ENCODE measurements at regions of chr18 and their contacts with region 1.

Region 1: DNA sequence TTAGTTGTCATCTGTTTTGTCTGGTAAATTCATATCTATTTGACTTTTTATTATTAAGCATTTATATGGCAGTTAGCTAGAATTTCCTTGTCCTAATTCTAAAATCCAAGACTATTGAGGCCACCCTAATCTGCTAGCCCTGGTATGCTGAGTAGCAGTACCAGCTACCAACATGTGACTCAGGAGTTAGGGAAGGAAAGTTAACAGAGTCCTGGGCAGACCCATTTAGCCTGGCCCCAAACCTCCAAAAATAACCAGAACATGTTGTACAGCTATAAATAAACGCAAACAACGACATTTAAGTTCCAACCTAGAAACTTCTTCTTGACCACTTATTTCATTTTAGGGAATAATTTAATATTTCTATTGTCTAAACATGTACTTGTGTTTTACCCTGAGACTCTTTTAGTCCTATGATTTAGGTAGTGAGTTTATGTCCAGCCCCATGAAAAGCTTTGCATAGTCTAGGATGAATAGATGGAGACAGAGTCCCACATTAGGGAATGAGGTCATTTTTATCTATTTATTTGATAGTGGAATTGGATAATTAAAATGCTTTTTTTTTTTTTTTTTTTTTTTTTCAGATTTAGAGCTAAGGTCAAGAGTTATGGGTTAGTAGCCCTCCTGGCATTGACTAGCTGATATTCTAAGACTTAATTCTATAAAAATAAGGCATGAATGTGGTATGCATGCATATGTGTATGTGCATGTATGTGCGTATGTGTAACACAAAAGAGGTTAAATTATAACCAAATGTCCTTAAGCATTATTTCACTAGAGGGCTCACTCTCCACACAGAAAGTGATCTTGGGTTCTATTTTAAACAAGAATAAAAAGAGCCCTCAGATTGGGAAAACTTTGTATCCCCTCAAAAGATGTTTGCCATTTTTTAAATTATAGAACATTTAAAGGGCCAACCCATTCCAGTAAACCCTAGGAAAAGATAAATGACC is 160.1 kb upstream of the MAPRE2 start:
- DNase-seq: no peak
- H3K4me3 ChIP-seq: no peak overlapping the region
- H3K27ac ChIP-seq: peak overlapping the region; percentile 36 to 76 (median 66)
- H3K4me1 ChIP-seq: peaks cover 0 to 23% (median 16%) of the 10 kb centered on the region in 4 donors
- H3K27me3 ChIP-seq: no peaks in the 10 kb centered on the region
- CTCF ChIP-seq: no peak
- EP300 ChIP-seq: peak in 1 of 4 donors; percentile 28
- POLR2A ChIP-seq: no peak

Region 2: GRCh38 chr18:34929336-34929780 is 48.2 kb after region 1 on chr18:
- intact Hi-C with region 1: no loop called
- DNase-seq: no peak
- H3K4me3 ChIP-seq: no peak overlapping the region
- H3K27ac ChIP-seq: no peak overlapping the region
- H3K4me1 ChIP-seq: peaks cover 0 to 9% (median 4%) of the 10 kb centered on the region in 4 donors
- H3K27me3 ChIP-seq: no peaks in the 10 kb centered on the region
- CTCF ChIP-seq: no peak
- EP300 ChIP-seq: no peak
- POLR2A ChIP-seq: no peak

Region 3: DNA sequence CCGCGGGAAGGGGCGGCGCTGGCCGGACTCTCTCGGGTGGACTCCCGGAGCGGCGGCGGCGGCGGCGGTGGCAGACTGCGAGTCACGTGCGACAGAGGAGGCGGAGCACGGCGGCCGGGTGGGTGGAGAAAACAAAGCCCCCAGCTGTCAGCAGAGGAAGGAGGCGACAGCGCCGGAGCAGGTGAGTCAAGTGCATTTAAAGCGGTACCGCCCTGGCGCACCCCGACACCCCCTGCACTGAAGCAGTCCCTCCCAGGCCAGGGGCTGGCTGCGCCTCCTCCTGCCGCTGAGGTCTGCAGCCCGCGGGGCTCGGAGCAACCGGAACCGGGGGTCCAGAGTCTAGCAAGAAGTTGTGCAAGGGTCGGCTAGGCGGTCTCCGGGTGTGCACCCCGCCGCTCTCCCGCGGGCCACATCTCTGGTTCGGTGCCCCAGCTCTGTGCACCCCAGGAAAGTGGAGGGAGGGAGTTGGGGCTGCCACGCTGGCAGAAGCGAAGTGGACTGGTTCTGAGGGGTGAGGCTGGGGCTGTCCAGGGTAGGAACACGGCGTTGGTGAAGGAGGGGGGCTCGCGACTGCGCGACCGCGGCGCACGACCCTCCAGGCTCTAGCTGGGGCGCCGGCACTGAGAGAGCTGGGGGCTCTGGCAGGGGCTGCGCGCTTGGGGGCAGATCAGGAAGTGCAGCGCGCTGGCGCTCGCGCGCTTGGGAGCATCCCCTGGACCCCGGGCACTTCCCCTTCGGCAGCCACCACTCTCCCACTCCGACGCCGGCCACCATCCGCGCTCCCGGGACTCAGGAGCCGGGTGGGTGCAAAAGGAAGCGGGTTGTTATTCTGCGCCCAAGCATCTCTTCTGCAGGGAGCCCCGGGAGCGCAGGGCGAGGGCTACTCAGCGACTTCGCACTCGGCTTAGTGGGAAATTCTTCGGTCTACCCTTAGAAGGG is 96.0 kb after region 1 on chr18:
- intact Hi-C with region 1: loop called (anchors 5 kb)
- DNase-seq: peak; percentile 86
- H3K4me3 ChIP-seq: peak overlapping the region; percentile 55 to 83 (median 71)
- H3K27ac ChIP-seq: peak overlapping the region; percentile 16 to 79 (median 74)
- H3K4me1 ChIP-seq: peaks cover 0 to 23% (median 15%) of the 10 kb centered on the region in 4 donors
- H3K27me3 ChIP-seq: no peaks in the 10 kb centered on the region
- CTCF ChIP-seq: no peak
- EP300 ChIP-seq: no peak
- POLR2A ChIP-seq: peak in 1 of 2 donors; percentile 23

Region 4: DNA sequence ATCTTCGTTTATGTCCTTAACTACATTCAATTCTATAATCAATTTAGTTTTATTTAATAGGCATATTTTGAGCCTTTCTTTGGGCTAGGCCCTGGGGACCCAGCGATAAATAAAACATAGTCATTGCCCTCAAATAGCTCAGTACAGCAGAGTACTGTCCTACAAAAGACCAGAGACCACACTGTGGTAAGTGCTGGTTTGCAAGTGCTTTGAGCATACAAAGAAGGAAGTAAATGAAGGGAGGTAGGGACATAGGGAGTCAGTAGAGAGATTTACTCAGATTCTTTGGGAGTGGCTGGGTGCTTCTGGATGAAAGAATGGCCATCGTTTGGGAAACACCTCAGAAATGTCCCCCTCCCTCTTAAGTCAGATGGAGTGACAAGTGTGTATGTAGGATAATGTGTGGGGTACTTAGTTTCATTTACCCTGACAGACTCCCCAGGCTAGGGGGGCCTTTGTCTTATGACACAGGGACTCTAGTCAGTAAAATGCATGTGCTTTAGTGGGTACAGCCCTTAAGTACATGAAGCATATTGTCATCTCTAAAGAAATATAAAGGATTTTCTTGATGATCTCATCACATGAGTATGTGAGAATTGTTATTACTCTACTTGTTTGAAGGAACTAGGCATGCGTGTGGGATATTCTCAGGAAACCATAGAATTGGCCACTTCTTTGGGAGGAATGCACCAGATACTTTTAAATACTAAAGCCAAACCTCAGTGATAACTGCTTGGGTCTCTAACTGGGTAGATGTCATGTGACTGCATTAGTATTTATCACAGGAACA is 195.2 kb after region 1 on chr18:
- intact Hi-C with region 1: no loop called
- DNase-seq: no peak
- H3K4me3 ChIP-seq: no peak overlapping the region
- H3K27ac ChIP-seq: no peak overlapping the region
- H3K4me1 ChIP-seq: peaks cover 0 to 15% (median 7%) of the 10 kb centered on the region in 4 donors
- H3K27me3 ChIP-seq: no peaks in the 10 kb centered on the region
- CTCF ChIP-seq: no peak
- EP300 ChIP-seq: no peak
- POLR2A ChIP-seq: no peak